ENCODE measurements at regions of chr3 and their contacts with region 1.

Region 1: GRCh38 chr3:56915966-56916586 is 114.3 kb upstream of the ARHGEF3 start:
- DNase-seq: no peak
- H3K4me3 ChIP-seq: no peak overlapping the region
- H3K27ac ChIP-seq: no peak overlapping the region
- H3K4me1 ChIP-seq: peaks cover 31% of the 10 kb centered on the region
- H3K27me3 ChIP-seq: no peaks in the 10 kb centered on the region
- CTCF ChIP-seq: no peak
- POLR2A ChIP-seq: no peak

Region 2: GRCh38 chr3:56737006-56737405 is 179.1 kb before region 1 on chr3:
- CTCF ChIA-PET with region 1: no interaction called
- POLR2A ChIA-PET with region 1: no interaction called
- dilution Hi-C with region 1: no loop called
- intact Hi-C with region 1: no loop called
- DNase-seq: no peak
- H3K4me3 ChIP-seq: no peak overlapping the region
- H3K27ac ChIP-seq: no peak overlapping the region
- H3K4me1 ChIP-seq: no peaks in the 10 kb centered on the region
- H3K27me3 ChIP-seq: no peaks in the 10 kb centered on the region
- CTCF ChIP-seq: no peak
- POLR2A ChIP-seq: no peak

Region 3: GRCh38 chr3:56878074-56878473 is 38.0 kb before region 1 on chr3:
- CTCF ChIA-PET with region 1: no interaction called
- POLR2A ChIA-PET with region 1: no interaction called
- dilution Hi-C with region 1: no loop called
- intact Hi-C with region 1: loop called (anchors 5 kb)
- DNase-seq: peak; percentile 53
- H3K4me3 ChIP-seq: no peak overlapping the region
- H3K27ac ChIP-seq: peak overlapping the region; percentile 13
- H3K4me1 ChIP-seq: peaks cover 30% of the 10 kb centered on the region
- H3K27me3 ChIP-seq: no peaks in the 10 kb centered on the region
- CTCF ChIP-seq: no peak
- POLR2A ChIP-seq: no peak

Measured in endothelial cell of umbilical vein (primary cell).